Naive thymus-derived CD4-positive, alpha-beta T cell (primary cell): ENCODE measurements at regions of chr3 and their contacts with region 1.

Region 1: DNA sequence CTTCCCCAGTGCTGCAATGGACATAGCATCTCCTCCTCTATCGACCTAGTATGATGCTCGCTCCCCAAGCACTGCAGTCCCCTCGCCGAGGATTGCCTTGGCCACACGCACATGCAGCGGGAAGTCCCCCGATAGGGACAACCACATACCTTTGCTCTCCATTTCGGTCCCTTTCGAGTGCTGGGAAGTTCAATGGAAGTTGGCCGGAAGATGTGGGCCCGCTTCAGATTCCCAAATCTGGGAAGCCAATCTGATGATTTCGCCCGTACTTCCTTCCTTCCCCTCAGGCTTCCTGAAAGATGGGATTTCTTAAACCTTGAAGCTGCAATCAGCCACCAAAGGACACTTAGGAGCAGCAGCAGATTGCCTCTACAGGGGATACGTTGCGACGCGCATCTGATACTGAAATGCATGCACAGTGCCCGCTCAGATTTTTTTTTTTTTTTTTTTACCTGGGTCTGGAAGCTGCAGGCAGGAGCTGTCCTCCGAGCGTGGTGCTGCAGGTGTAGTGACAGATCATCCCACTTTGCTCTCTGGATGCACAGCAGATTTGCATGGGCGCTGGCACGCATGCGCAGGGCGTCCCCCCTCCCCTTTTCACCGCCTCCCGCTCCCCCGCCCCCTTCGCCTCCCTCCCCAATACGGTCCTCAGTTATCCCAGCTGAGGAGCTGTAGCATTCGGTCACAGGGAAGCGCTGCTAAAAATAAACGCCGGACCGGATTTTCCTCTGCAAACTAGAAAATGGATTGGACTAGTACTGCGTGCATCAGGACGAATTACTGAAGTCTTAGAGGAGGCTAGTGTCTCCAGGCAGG is at the start of gene FGF12:
- DNase-seq: peak in 1 of 9 donors; percentile 0
- ATAC-seq: no peak
- H3K4me3 ChIP-seq: no peak within 1 kb of the TSS
- H3K4me3 Mint-ChIP-seq: peak within 1 kb of the TSS in 2 of 10 donors; percentile 11 to 28
- H3K27ac ChIP-seq: no peak within 1 kb of the TSS
- H3K27ac Mint-ChIP-seq: no peak within 1 kb of the TSS
- H3K4me1 ChIP-seq: peaks cover 0 to 5% of the 10 kb centered on the region in 2 donors
- H3K4me1 Mint-ChIP-seq: peaks cover 0 to 12% (median 5%) of the 10 kb centered on the region in 7 donors
- H3K27me3 ChIP-seq: peaks cover 0 to 4% of the 10 kb centered on the region in 2 donors
- H3K27me3 Mint-ChIP-seq: peaks cover 19 to 53% (median 39%) of the 10 kb centered on the region in 5 donors
- total RNA-seq, gene FGF12: not detected

Region 2: DNA sequence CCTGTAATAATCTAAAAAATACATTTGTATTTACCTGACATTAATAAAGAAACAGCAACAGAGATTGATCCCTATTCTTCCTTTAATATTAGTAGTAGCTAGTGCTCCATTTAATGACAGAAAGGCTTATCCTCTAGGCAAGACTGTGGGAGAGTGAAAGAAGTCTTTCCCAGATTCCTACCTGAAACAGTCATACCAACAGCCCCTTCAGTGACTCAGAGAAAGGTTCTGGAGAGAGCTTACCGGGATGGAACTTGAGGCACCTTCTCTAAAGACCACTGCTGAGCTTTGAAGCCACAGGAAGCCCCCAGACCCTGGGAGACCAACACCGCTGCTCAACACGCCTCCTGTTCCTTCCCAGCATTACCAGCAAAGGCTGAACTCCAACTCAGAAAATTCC is 67.0 kb after region 1 on chr3:
- CTCF ChIA-PET with region 1: no interaction called
- POLR2A ChIA-PET with region 1: no interaction called
- intact Hi-C with region 1: loop called in 1 of 2 experiments (anchors 5 kb)
- DNase-seq: no peak
- ATAC-seq: no peak
- H3K4me3 ChIP-seq: no peak overlapping the region
- H3K4me3 Mint-ChIP-seq: no peak overlapping the region
- H3K27ac ChIP-seq: no peak overlapping the region
- H3K27ac Mint-ChIP-seq: no peak overlapping the region
- H3K4me1 ChIP-seq: no peaks in the 10 kb centered on the region
- H3K4me1 Mint-ChIP-seq: no peaks in the 10 kb centered on the region
- H3K27me3 ChIP-seq: no peaks in the 10 kb centered on the region
- H3K27me3 Mint-ChIP-seq: no peaks in the 10 kb centered on the region